Activated CD4-positive, alpha-beta T cell treated with anti-CD3 and anti-CD28 coated beads for 36 hours (primary cell): ENCODE measurements at regions of chr3 and their contacts with region 1.

Region 1: GRCh38 chr3:128845778-128846485 is 33.5 kb upstream of the ACAD9 start:
- DNase-seq: peak; percentile 93
- ATAC-seq: peak; percentile 84
- H3K4me3 Mint-ChIP-seq: peak overlapping the region; percentile 62
- H3K27ac Mint-ChIP-seq: peak overlapping the region; percentile 95
- H3K4me1 Mint-ChIP-seq: peaks cover 20% of the 10 kb centered on the region
- H3K27me3 Mint-ChIP-seq: no peaks in the 10 kb centered on the region

Region 2: GRCh38 chr3:128524374-128525299 is 321.3 kb before region 1 on chr3:
- CTCF ChIA-PET with region 1: no interaction called
- POLR2A ChIA-PET with region 1: no interaction called
- intact Hi-C with region 1: loop called in 1 of 2 experiments (anchors 10 kb)
- DNase-seq: no peak
- ATAC-seq: no peak
- H3K4me3 Mint-ChIP-seq: no peak overlapping the region
- H3K27ac Mint-ChIP-seq: no peak overlapping the region
- H3K4me1 Mint-ChIP-seq: no peaks in the 10 kb centered on the region
- H3K27me3 Mint-ChIP-seq: peaks cover 16% of the 10 kb centered on the region

Region 3: GRCh38 chr3:128818186-128818787 is 27.6 kb before region 1 on chr3:
- CTCF ChIA-PET with region 1: interaction called, 11 read pairs
- POLR2A ChIA-PET with region 1: no interaction called
- intact Hi-C with region 1: no loop called
- DNase-seq: no peak
- ATAC-seq: no peak
- H3K4me3 Mint-ChIP-seq: no peak overlapping the region
- H3K27ac Mint-ChIP-seq: peak overlapping the region; percentile 20
- H3K4me1 Mint-ChIP-seq: no peaks in the 10 kb centered on the region
- H3K27me3 Mint-ChIP-seq: no peaks in the 10 kb centered on the region

Region 4: GRCh38 chr3:128969993-128970739 is 124.2 kb after region 1 on chr3:
- CTCF ChIA-PET with region 1: no interaction called
- POLR2A ChIA-PET with region 1: no interaction called
- intact Hi-C with region 1: no loop called
- DNase-seq: peak; percentile 80
- ATAC-seq: peak; percentile 74
- H3K4me3 Mint-ChIP-seq: no peak overlapping the region
- H3K27ac Mint-ChIP-seq: no peak overlapping the region
- H3K4me1 Mint-ChIP-seq: peaks cover 3% of the 10 kb centered on the region
- H3K27me3 Mint-ChIP-seq: no peaks in the 10 kb centered on the region

Region 5: GRCh38 chr3:129616713-129617112 is 770.8 kb after region 1 on chr3:
- CTCF ChIA-PET with region 1: no interaction called
- POLR2A ChIA-PET with region 1: no interaction called
- intact Hi-C with region 1: no loop called
- DNase-seq: no peak
- ATAC-seq: no peak
- H3K4me3 Mint-ChIP-seq: no peak overlapping the region
- H3K27ac Mint-ChIP-seq: no peak overlapping the region
- H3K4me1 Mint-ChIP-seq: no peaks in the 10 kb centered on the region
- H3K27me3 Mint-ChIP-seq: no peaks in the 10 kb centered on the region